Activated B cell treated with CpG ODN at 0.5 μM for 24 hours (primary cell): ENCODE measurements at regions of chr17 and their contacts with region 1.

Region 1: DNA sequence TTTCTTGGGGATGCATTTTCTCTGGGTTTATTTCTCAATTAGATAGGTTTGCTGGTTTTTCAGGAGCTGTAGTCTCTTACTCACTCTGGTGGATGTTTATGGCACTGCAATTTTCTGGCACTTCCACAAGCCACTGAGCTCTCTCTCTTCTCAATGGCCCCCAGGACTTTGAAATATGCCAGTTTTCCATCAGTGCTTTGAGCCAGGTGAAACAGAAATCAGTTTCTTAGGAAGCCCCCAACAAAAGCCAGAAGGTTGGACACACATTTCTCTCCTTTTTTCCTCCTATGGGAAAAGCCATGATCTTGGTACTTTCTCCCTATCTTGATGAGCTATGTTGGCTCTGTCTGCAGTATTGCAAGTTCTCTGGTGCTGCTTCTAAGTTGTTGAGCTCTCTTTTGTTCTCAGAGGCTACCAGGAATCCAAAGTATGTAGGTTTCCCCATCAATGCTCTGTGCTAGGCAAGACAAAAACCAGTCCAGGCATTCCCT is 90.7 kb upstream of the SMIM36 start:
- DNase-seq: no peak
- ATAC-seq: peak; percentile 75
- H3K4me3 Mint-ChIP-seq: no peak overlapping the region
- H3K27ac Mint-ChIP-seq: no peak overlapping the region
- H3K4me1 Mint-ChIP-seq: no peaks in the 10 kb centered on the region
- H3K27me3 Mint-ChIP-seq: peaks cover 4% of the 10 kb centered on the region
- CTCF ChIP-seq: no peak

Region 2: GRCh38 chr17:55134486-55135157 is 467.3 kb before region 1 on chr17:
- CTCF ChIA-PET with region 1: no interaction called
- POLR2A ChIA-PET with region 1: no interaction called
- intact Hi-C with region 1: no loop called
- DNase-seq: no peak
- ATAC-seq: no peak
- H3K4me3 Mint-ChIP-seq: no peak overlapping the region
- H3K27ac Mint-ChIP-seq: no peak overlapping the region
- H3K4me1 Mint-ChIP-seq: no peaks in the 10 kb centered on the region
- H3K27me3 Mint-ChIP-seq: no peaks in the 10 kb centered on the region
- CTCF ChIP-seq: no peak

Region 3: GRCh38 chr17:55533608-55534007 is 68.3 kb before region 1 on chr17:
- CTCF ChIA-PET with region 1: interaction called, 169 read pairs
- POLR2A ChIA-PET with region 1: no interaction called
- intact Hi-C with region 1: no loop called
- DNase-seq: no peak
- ATAC-seq: no peak
- H3K4me3 Mint-ChIP-seq: no peak overlapping the region
- H3K27ac Mint-ChIP-seq: no peak overlapping the region
- H3K4me1 Mint-ChIP-seq: no peaks in the 10 kb centered on the region
- H3K27me3 Mint-ChIP-seq: peaks cover 4% of the 10 kb centered on the region
- CTCF ChIP-seq: no peak

Region 4: DNA sequence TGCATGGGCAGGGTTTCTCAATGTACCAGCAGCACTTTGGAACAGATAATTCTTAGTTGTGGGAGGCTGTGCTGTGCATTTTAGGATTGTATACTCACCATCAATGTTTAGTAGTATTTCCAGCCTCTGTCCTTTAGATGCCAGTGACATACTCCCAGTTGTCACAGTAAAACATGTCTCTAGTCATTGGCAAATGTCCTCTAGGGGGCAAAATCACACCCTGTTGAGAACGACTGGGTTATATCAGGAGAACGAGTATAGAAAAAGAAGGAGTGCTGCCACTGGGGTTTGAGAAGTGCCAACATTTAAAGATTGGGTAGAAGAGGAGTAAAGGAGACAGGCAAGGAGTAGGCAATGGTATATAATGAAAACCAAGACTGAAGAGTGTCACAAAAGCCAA is 52.8 kb before region 1 on chr17:
- CTCF ChIA-PET with region 1: interaction called, 9 read pairs
- POLR2A ChIA-PET with region 1: no interaction called
- intact Hi-C with region 1: loop called (anchors 1 kb)
- DNase-seq: no peak
- ATAC-seq: no peak
- H3K4me3 Mint-ChIP-seq: no peak overlapping the region
- H3K27ac Mint-ChIP-seq: no peak overlapping the region
- H3K4me1 Mint-ChIP-seq: no peaks in the 10 kb centered on the region
- H3K27me3 Mint-ChIP-seq: peaks cover 3% of the 10 kb centered on the region
- CTCF ChIP-seq: no peak